Activated CD4-positive, alpha-beta memory T cell treated with anti-CD3 and anti-CD28 coated beads, Interleukin-2, amount 10 ng/mL, durations not matched to agents 7 days and 5 days (primary cell): ENCODE measurements at regions of chr11 and their contacts with region 1.

Region 1: GRCh38 chr11:9460322-9461067 is at the start of gene ZNF143:
- DNase-seq: peak; percentile 100
- H3K4me3 Mint-ChIP-seq: peak within 1 kb of the TSS; percentile 95
- H3K27ac Mint-ChIP-seq: peak within 1 kb of the TSS; percentile 95
- H3K4me1 Mint-ChIP-seq: peaks cover 28% of the 10 kb centered on the region
- H3K27me3 Mint-ChIP-seq: no peaks in the 10 kb centered on the region
- total RNA-seq, gene ZNF143: 43.5 to 45.5 TPM

Region 2: DNA sequence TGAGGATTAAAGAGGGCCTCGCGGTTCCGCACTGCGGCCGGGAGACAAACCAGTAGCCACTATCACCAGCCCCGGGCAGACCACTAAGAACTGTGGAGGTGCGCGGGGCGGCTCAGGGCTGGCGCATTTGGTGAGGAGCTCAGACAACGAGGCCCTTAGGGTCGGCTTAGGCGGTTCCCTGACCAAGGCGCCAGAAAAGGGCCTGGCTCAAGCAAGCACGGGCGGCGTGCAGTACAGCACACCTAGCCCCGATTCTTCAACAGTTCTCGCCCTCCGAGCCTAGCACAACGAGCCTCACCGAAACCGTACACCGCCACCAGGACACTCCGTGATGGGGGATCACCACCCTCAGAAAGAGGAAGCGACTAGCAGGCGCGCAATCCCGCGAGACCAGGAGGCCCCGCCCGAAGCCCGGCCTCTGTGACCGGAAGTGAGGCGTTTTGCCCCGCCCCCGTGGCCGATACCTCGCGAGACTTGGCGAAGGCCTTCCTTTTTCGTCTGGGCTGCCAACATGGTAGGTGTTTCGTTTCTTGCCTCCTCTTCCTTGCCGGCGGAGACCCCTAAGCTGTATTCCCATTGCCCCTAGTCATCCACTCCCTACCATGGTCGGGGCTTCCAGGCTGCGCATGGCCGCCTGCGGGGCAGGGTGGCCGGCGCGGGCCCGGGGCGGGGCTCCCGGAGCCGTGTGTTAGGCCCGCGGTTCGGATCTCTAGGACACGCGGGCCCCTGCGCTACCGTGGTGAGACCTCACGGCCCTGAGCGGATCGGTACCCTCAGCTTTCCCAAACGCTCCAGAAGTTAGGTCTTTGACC is 778.0 kb before region 1 on chr11 and contains the starts of genes RPL27A and TRIM66:
- CTCF ChIA-PET with region 1: no interaction called
- POLR2A ChIA-PET with region 1: interaction called, 10 read pairs
- DNase-seq: peak; percentile 99
- H3K4me3 Mint-ChIP-seq: peak within 1 kb of the TSS; percentile 90
- H3K27ac Mint-ChIP-seq: peak within 1 kb of the TSS; percentile 94
- H3K4me1 Mint-ChIP-seq: peaks cover 50% of the 10 kb centered on the region
- H3K27me3 Mint-ChIP-seq: no peaks in the 10 kb centered on the region
- total RNA-seq, gene RPL27A: 817 to 856 TPM
- total RNA-seq, gene TRIM66: 17.8 to 22.4 TPM

Region 3: DNA sequence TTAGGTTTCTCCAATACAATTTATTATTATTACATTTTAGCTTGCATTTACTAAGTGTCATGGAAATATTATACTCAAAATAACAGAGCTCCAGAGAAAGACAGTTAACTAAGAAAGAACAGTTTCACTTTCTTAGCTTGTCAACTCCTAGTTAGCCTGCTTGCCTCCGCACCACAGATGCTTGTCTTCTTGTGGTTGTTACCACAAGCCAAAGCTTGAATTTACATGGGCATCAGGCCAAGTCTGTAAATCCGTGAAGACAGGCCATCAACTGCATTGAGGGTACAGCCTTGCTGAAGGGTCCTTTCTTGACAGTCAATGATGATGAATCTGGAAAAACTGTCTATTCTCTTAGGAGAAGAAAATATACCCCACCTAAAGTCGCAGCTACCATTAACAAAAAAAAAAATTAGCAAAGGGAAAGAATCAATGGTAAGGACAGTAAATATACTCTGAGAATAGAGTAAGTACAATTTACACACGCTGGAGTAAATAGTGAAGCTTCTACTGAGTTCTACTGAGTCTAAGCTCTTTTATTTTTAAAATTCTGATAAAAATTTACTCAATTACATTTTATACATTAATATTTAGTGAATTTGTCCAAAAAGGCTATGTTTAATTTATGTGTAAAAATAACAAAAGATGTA is 179.7 kb before region 1 on chr11:
- CTCF ChIA-PET with region 1: interaction called, 4 read pairs
- POLR2A ChIA-PET with region 1: interaction called, 10 read pairs
- DNase-seq: peak; percentile 73
- H3K4me3 Mint-ChIP-seq: no peak overlapping the region
- H3K27ac Mint-ChIP-seq: no peak overlapping the region
- H3K4me1 Mint-ChIP-seq: peaks cover 14% of the 10 kb centered on the region
- H3K27me3 Mint-ChIP-seq: peaks cover 6% of the 10 kb centered on the region

Region 4: DNA sequence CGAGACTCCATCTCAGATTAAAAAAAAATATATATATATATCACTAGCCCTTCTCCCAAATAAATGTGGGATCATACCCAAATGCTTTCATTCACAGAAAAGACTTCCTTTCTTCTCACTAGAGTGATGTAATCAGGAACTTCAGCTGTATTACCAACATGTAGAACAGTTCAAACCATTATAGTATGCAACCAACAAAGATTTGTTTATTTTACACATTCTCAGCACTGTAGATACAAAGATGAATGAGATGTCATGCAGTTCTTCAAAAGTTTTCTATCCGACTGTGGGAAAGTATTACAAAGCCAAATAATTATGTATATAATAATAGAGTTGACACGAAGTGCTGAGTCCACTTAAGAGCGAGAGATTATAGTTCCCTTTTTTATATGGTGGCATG is 21.9 kb before region 1 on chr11:
- CTCF ChIA-PET with region 1: no interaction called
- POLR2A ChIA-PET with region 1: interaction called, 18 read pairs
- DNase-seq: no peak
- H3K4me3 Mint-ChIP-seq: no peak overlapping the region
- H3K27ac Mint-ChIP-seq: no peak overlapping the region
- H3K4me1 Mint-ChIP-seq: peaks cover 2% of the 10 kb centered on the region
- H3K27me3 Mint-ChIP-seq: no peaks in the 10 kb centered on the region

Region 5: GRCh38 chr11:9506489-9507276 is 46.2 kb after region 1 on chr11:
- CTCF ChIA-PET with region 1: interaction called, 36 read pairs
- POLR2A ChIA-PET with region 1: interaction called, 13 read pairs
- DNase-seq: peak; percentile 78
- H3K4me3 Mint-ChIP-seq: no peak overlapping the region
- H3K27ac Mint-ChIP-seq: no peak overlapping the region
- H3K4me1 Mint-ChIP-seq: peaks cover 12% of the 10 kb centered on the region
- H3K27me3 Mint-ChIP-seq: no peaks in the 10 kb centered on the region

Region 6: DNA sequence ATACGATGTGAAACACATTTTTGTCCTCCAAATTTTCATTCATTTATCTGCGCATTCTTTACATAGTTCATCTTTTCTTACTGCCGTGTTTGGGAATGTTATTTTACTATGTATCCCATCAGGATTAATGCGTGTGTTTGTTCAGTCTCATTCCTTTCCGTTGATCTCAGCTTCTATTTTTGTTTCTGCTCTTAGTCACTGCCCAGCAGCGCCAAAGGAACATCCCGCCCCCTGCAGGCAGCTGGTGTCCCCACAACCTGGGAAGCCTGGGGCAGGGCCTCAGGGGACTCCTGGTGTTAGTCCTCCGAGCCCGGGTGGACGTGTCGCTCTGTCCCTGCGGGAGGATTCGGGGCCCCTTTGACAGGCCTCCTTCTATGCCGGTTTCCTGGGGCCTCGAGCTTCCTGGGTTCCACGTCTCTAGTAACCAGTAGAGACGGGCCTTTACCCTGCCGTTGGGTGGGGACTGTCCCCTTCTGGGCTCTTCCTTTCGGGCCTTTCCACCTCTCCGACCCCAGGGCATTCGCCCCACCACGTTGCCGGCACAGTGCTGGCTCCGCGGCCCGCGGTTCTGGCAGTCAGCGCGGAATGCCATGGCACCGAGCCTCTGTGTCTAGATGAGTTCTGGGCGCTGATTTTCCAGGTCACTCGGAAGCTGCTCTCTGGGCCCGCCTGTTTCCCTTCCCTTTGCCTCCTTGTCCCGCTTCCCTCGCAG is 152.8 kb after region 1 on chr11:
- CTCF ChIA-PET with region 1: interaction called, 7 read pairs
- POLR2A ChIA-PET with region 1: interaction called, 25 read pairs
- DNase-seq: peak; percentile 88
- H3K4me3 Mint-ChIP-seq: peak overlapping the region; percentile 85
- H3K27ac Mint-ChIP-seq: peak overlapping the region; percentile 97
- H3K4me1 Mint-ChIP-seq: peaks cover 27% of the 10 kb centered on the region
- H3K27me3 Mint-ChIP-seq: peaks cover 3% of the 10 kb centered on the region